ENCODE measurements at regions of chr2 and their contacts with region 1.

Region 1: DNA sequence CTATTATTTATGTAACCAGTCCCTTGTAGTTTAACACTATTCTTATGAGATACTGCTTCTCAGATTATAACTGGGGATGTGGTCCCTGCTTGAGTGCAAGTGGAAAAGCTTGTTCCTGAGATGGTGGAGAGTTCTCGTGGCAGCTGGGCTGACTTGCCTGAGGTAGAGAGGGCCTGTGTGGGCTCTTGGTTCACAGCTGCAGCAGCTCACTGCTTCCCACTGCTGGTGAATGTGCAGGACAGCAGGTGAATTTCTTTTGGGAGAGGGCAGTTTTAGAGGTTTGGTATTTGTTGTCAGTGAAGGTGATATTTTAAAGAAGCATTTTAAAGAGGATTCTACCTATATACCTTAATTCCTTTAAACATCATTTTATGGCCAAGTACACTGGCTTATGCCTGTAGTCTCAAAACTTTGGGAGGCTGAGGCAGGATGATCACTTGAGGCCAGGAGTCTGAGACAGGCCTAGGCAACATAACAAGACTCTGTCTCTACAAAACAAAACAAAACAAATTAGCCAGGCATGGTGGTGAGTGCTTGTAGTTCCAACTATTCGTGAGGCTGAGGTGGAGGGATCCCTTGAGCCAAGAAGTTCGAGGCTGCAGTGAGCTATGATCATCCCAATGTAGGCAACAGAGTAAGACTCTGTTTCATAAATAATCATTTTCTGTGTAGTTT is 94.8 kb downstream of the MTA3 start:
- DNase-seq: peak; percentile 77
- ATAC-seq: peak; percentile 98
- H3K4me3 ChIP-seq: no peak overlapping the region
- H3K27ac ChIP-seq: no peak overlapping the region
- H3K4me1 ChIP-seq: no peaks in the 10 kb centered on the region
- H3K27me3 ChIP-seq: no peaks in the 10 kb centered on the region
- CTCF ChIP-seq: peak; percentile 97
- POLR2A ChIP-seq: no peak
- RAD21 ChIP-seq: peak; percentile 96

Region 2: DNA sequence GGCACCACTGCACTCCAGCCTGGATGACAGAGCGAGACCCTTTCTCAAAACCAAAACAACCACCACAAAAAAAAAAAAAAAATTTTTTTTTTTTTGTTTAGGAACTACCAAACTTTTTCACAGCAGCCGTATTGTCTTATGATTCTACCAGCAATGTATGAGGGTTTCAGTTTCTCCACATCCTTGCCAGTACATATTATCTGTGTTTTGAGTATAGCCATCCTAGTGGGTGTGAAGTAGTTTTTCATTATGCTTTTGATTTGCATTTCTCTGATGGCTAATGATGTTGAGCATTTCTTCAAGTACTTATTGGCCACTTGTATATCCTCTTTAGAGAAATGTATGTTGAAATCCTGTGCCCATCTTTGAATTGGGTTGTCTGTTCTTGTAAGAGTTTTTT is 353.9 kb before region 1 on chr2:
- CTCF ChIA-PET with region 1: no interaction called
- POLR2A ChIA-PET with region 1: interaction called, 11 read pairs
- dilution Hi-C with region 1: no loop called
- in situ Hi-C with region 1: no loop called
- intact Hi-C with region 1: no loop called
- DNase-seq: no peak
- ATAC-seq: no peak
- H3K4me3 ChIP-seq: no peak overlapping the region
- H3K27ac ChIP-seq: no peak overlapping the region
- H3K4me1 ChIP-seq: no peaks in the 10 kb centered on the region
- H3K27me3 ChIP-seq: no peaks in the 10 kb centered on the region
- CTCF ChIP-seq: no peak
- POLR2A ChIP-seq: no peak
- RAD21 ChIP-seq: no peak

Region 3: DNA sequence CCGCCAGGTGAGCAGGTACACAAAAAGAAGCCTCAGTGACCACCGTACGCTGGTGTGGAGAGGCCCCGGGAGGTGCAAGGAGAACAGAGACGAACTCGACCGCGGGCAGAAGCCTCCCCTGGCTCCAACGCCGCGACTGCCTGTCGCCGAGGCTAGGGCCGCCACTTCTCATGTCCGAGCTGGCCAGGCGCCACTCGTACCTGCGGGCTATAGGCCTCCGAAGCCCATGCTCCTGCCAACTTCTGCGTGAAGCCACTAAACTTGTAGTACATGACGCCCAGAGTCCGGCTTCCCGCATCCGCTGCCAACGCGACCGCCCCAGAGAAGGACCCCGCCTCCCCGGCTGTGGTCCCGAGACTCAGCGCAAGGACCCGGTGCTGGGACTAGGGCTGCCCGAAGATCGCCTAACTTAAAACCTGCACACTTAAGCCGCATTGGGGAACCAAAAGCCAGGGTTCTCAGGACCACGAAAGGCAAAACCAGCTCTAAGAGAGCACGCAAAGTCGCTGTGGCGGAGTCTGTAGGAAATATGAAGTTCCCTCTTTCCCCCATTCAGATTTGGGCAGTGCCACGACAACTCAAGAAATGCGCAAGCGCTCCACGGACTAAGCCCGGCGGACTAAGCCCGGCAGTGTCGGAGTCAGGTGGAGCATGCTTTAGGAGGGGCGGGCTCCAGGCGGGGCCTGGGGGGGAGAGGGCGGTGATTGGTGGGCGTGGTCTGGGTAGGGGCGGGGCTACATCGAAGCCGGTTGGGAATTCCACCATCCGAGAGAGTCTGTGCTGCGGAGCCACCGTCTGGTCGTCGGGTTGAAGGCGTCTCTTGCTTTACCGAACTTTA is 302.1 kb before region 1 on chr2 and contains the start of gene COX7A2L:
- CTCF ChIA-PET with region 1: no interaction called
- POLR2A ChIA-PET with region 1: no interaction called
- dilution Hi-C with region 1: no loop called
- in situ Hi-C with region 1: no loop called
- intact Hi-C with region 1: loop called (anchors 10 kb)
- DNase-seq: peak; percentile 97
- ATAC-seq: peak; percentile 99
- H3K4me3 ChIP-seq: peak within 1 kb of the TSS; percentile 86
- H3K27ac ChIP-seq: peak within 1 kb of the TSS; percentile 94
- H3K4me1 ChIP-seq: peaks cover 4% of the 10 kb centered on the region
- H3K27me3 ChIP-seq: peaks cover 4% of the 10 kb centered on the region
- CTCF ChIP-seq: peak; percentile 46
- POLR2A ChIP-seq: peak; percentile 92
- RAD21 ChIP-seq: peak; percentile 52
- total RNA-seq, gene COX7A2L: 123 and 192 TPM in 2 replicates

Region 4: DNA sequence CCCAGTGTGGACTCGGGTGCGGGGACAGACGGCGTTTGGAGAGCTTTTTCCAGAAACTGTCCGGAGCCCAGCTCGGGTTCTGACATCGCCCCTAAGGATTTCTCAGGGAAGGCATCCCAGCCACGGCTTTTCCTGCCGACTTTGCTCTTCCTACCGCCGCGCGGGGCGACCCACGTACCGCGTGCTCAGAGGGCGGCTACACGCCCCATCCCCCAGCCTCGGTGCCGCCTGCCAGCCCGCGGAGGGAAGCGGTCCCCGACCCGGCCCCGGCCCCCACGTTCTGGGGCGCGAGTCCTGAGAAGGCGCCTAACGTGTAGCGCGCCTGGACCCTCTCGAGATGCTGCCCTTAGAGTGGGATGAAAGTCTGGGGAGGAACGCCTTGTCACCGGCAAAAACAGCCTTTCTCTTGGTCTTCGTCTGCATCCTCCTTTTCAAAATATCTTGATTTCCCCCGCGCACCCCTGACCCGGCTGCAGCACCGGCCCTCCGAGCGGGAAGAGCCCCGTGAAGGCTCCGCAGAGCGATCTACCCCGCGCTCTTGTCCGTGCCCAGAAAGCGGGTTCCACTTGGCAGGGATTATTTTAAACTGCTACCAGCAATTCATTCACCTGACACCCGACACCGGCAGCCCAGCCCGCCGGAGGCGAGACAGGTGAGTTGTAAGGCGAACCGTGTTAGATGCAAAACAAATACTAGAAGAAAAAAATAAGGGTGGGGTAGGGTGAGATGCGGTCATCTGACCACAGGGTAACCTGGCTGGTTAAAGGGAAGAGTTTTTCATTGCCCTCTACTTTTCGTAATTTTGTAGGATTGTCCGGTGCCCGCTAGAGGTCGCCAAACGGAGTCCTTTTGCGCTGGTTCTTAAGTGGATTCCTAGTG is 168.6 kb before region 1 on chr2:
- CTCF ChIA-PET with region 1: interaction called, 6 read pairs
- POLR2A ChIA-PET with region 1: no interaction called
- dilution Hi-C with region 1: no loop called
- in situ Hi-C with region 1: loop called (anchors 10 kb)
- intact Hi-C with region 1: loop called (anchors 1 kb)
- DNase-seq: peak; percentile 75
- ATAC-seq: peak; percentile 72
- H3K4me3 ChIP-seq: peak overlapping the region; percentile 31
- H3K27ac ChIP-seq: no peak overlapping the region
- H3K4me1 ChIP-seq: no peaks in the 10 kb centered on the region
- H3K27me3 ChIP-seq: peaks cover 52% of the 10 kb centered on the region
- CTCF ChIP-seq: peak; percentile 86
- POLR2A ChIP-seq: no peak
- RAD21 ChIP-seq: peak; percentile 76

Region 5: GRCh38 chr2:42513257-42513918 is 149.9 kb before region 1 on chr2:
- CTCF ChIA-PET with region 1: interaction called, 6 read pairs
- POLR2A ChIA-PET with region 1: no interaction called
- dilution Hi-C with region 1: no loop called
- in situ Hi-C with region 1: no loop called
- intact Hi-C with region 1: loop called (anchors 1 kb)
- DNase-seq: peak; percentile 43
- ATAC-seq: peak; percentile 79
- H3K4me3 ChIP-seq: no peak overlapping the region
- H3K27ac ChIP-seq: no peak overlapping the region
- H3K4me1 ChIP-seq: no peaks in the 10 kb centered on the region
- H3K27me3 ChIP-seq: peaks cover 2% of the 10 kb centered on the region; the same call in 1 of the 2 replicates
- CTCF ChIP-seq: peak; percentile 59
- POLR2A ChIP-seq: no peak
- RAD21 ChIP-seq: peak; percentile 55

Measured in IMR-90 (cell line).